ENCODE measurements at regions of chr13 and their contacts with region 1.

Region 1: GRCh38 chr13:20495082-20496023 is 30.3 kb downstream of the CRYL1 start:
- DNase-seq: no peak
- ATAC-seq: peak; percentile 93
- H3K4me3 Mint-ChIP-seq: no peak overlapping the region
- H3K27ac Mint-ChIP-seq: no peak overlapping the region
- H3K4me1 Mint-ChIP-seq: no peaks in the 10 kb centered on the region
- H3K27me3 Mint-ChIP-seq: no peaks in the 10 kb centered on the region
- CTCF ChIP-seq: peak; percentile 82

Region 2: DNA sequence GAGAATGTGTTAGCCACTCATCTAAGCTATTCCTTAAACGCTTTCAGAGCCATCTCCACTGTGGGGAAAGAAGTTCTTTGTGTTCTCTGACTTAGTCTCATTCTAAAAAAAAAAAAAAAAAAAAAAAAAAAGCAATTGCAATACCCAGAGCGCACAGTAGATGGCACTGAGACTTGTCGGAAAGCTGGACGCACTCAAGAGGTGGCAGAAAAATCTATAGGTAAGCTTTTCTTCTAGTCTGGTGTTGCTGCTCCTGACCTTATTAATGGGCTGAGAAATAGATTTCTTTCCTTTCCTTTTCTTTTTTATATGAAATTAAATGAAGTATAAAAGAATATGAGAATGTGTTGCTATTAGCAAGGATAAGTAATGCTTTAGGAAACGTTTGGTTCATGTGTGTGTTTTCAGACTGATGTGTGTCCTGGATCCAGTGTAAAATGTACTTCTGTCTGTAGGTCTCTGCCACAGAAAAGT is 298.0 kb before region 1 on chr13:
- CTCF ChIA-PET with region 1: no interaction called
- POLR2A ChIA-PET with region 1: no interaction called
- intact Hi-C with region 1: loop called (anchors 10 kb)
- DNase-seq: no peak
- ATAC-seq: peak; percentile 71
- H3K4me3 Mint-ChIP-seq: no peak overlapping the region
- H3K27ac Mint-ChIP-seq: no peak overlapping the region
- H3K4me1 Mint-ChIP-seq: peaks cover 16% of the 10 kb centered on the region
- H3K27me3 Mint-ChIP-seq: peaks cover 40% of the 10 kb centered on the region
- CTCF ChIP-seq: peak; percentile 6

Region 3: DNA sequence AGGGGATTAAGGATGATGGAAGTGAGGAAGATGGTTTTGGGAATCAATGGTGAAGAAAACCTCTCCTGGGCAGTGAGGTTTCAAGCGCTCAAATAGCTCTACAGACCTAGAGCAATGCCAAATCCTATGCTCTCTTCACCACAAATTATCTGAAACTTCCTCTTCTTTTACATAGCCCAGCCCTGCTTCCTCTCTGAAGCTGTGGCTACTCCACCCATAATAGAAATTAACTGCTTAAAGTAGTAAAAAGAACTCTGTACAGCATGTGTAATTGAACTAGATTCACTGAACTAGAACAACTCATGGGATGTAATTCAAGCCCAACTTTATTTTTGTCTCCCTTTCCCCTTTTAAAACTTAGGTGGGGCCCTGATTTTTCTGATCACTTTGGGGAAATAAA is 51.2 kb after region 1 on chr13:
- CTCF ChIA-PET with region 1: interaction called, 5 read pairs
- POLR2A ChIA-PET with region 1: no interaction called
- intact Hi-C with region 1: loop called (anchors 1 kb)
- DNase-seq: no peak
- ATAC-seq: peak; percentile 63
- H3K4me3 Mint-ChIP-seq: peak overlapping the region; percentile 29
- H3K27ac Mint-ChIP-seq: peak overlapping the region; percentile 48
- H3K4me1 Mint-ChIP-seq: peaks cover 47% of the 10 kb centered on the region
- H3K27me3 Mint-ChIP-seq: no peaks in the 10 kb centered on the region
- CTCF ChIP-seq: no peak

Region 4: DNA sequence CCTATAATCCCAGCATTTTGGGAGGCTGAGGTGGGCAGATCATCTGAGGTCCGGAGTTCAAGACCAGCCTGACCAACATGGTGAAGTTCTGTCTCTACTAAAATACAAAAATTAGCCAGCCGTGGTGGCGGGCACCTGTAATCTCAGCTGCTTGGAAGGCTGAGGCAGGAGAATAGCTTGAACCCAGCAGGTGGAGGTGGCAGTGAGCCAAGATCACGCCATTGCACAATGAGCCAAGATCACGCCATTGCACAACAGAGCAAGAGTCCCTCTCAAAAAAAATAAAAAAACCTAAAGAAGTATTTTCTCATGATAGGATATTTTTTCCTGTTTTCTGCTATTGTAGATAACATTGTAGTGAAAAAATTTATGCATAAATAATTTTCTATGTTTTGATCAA is 84.9 kb after region 1 on chr13:
- CTCF ChIA-PET with region 1: interaction called, 7 read pairs
- POLR2A ChIA-PET with region 1: no interaction called
- intact Hi-C with region 1: loop called (anchors 1 kb)
- DNase-seq: no peak
- ATAC-seq: no peak
- H3K4me3 Mint-ChIP-seq: no peak overlapping the region
- H3K27ac Mint-ChIP-seq: no peak overlapping the region
- H3K4me1 Mint-ChIP-seq: no peaks in the 10 kb centered on the region
- H3K27me3 Mint-ChIP-seq: no peaks in the 10 kb centered on the region
- CTCF ChIP-seq: no peak

Region 5: DNA sequence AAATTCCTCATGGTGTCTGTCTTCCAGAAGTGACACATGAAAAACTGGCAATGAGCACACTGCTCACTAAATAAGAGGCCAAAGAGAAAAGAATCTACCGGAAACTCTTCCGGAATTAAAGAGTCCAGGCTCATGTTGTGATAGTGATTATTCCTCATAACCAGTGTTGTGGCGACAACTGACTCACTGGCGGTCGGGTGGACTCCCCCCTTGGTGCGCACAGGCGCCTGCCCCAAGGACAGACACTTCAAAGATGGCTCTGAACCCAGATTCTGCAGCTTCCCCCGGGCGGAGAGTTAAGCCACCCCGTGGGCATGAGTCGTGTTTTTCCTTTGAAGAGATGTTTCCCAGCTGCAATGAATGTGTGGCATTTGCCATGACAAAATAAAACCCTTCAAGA is 218.4 kb after region 1 on chr13:
- CTCF ChIA-PET with region 1: interaction called, 5 read pairs
- POLR2A ChIA-PET with region 1: no interaction called
- intact Hi-C with region 1: loop called (anchors 1 kb)
- DNase-seq: no peak
- ATAC-seq: no peak
- H3K4me3 Mint-ChIP-seq: no peak overlapping the region
- H3K27ac Mint-ChIP-seq: no peak overlapping the region
- H3K4me1 Mint-ChIP-seq: peaks cover 7% of the 10 kb centered on the region
- H3K27me3 Mint-ChIP-seq: peaks cover 7% of the 10 kb centered on the region
- CTCF ChIP-seq: no peak

Region 6: DNA sequence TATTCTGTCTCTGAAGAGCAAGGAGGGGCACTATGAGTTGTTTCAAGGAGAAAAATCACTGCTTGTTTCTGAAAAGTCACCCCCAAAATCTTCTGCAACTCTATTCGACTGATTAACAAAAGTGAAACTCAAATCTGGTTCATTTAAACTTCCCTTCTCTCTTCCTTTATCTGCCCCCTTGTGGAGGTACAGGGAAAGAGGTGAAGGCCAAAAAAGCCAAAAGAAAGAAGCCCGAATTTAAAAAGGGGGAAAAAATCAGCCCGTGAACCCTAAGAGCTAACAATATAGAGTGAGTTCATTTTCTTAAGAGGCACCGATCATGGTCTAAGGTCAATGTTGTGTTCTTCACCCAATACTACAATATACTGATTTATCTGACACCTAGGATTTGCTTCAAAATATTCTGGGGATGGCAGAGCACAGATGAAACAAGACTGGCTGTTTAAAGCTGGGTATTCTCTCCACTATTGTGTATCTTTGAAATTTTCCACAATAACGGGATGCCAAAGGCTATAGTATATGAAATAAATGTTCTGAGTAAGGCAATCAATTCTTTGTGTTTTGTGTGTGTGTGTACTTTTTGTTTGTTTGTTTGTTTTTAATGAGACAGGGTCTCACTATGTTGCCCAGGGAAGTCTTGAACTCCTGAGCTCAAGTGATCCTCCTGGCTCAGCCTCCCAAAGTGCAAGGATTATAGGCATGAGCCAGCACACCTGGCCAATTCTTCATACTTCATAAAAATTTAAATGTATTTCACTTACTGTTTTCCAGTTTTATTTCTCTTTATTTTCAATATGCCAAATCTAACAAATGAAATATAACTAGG is 333.4 kb after region 1 on chr13:
- CTCF ChIA-PET with region 1: interaction called, 91 read pairs
- POLR2A ChIA-PET with region 1: no interaction called
- intact Hi-C with region 1: loop called (anchors 1 kb)
- DNase-seq: no peak
- ATAC-seq: peak; percentile 76
- H3K4me3 Mint-ChIP-seq: no peak overlapping the region
- H3K27ac Mint-ChIP-seq: peak overlapping the region; percentile 31
- H3K4me1 Mint-ChIP-seq: peaks cover 6% of the 10 kb centered on the region
- H3K27me3 Mint-ChIP-seq: no peaks in the 10 kb centered on the region
- CTCF ChIP-seq: peak; percentile 64

Region 7: DNA sequence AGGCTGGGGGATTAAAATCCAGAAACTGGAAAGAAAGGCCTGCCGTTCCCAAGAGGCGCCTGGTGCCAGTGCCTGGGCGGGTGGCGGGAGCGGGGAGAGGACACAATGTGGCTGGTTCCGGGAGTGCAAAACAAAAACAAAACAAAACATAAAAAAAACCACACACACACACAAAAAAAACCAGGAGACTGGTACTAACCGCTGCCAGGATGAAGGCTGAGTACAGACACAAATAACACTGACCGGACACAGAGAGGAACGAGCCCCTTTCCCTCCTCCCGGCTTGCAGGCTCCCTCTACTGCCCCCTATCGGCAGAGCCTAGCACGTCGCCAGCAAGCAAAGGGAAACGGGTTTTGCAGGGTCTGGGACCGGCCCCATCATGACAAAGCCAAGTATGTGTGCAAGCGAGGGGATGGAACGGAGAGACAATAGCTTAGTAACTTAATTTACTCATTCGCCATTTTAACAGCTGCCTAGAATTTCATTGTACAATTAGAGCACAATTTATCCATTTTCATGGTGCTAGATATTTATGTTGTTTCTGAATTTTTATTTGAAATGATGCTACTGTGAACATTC is 981.6 kb after region 1 on chr13:
- CTCF ChIA-PET with region 1: no interaction called
- POLR2A ChIA-PET with region 1: no interaction called
- intact Hi-C with region 1: loop called (anchors 1 kb)
- DNase-seq: peak; percentile 62
- ATAC-seq: peak; percentile 92
- H3K4me3 Mint-ChIP-seq: peak overlapping the region; percentile 87
- H3K27ac Mint-ChIP-seq: no peak overlapping the region
- H3K4me1 Mint-ChIP-seq: peaks cover 13% of the 10 kb centered on the region
- H3K27me3 Mint-ChIP-seq: no peaks in the 10 kb centered on the region
- CTCF ChIP-seq: peak; percentile 36

Measured in activated B cell treated with CpG ODN at 0.5 μM for 24 hours (primary cell).